Activated T-helper 1 cell treated with anti-CD3 and anti-CD28 coated beads, Interleukin-12 subunit alpha, Interleukin-12 subunit beta, Interleukin-2, Interleukin-4 antibody, amounts not matched to agents 30 ng/mL and 10 ng/mL and 1 ng/mL, durations not matched to agents 14 hours and 24 hours and 36 hours (primary cell): ENCODE measurements at regions of chr20 and their contacts with region 1.

Region 1: GRCh38 chr20:49278036-49278817 is at the start of gene ZNFX1:
- DNase-seq: peak; percentile 98
- H3K4me3 Mint-ChIP-seq: peak within 1 kb of the TSS; percentile 99
- H3K27ac Mint-ChIP-seq: peak within 1 kb of the TSS; percentile 98
- H3K4me1 Mint-ChIP-seq: peaks cover 61% of the 10 kb centered on the region
- H3K27me3 Mint-ChIP-seq: no peaks in the 10 kb centered on the region
- total RNA-seq, gene ZNFX1: 68.9 and 70.4 TPM in 2 replicates

Region 2: GRCh38 chr20:48769069-48769879 is 509.0 kb before region 1 on chr20:
- intact Hi-C with region 1: loop called (anchors 5 kb)
- DNase-seq: peak; percentile 86
- H3K4me3 Mint-ChIP-seq: peak overlapping the region; percentile 66
- H3K27ac Mint-ChIP-seq: peak overlapping the region; percentile 89
- H3K4me1 Mint-ChIP-seq: peaks cover 87% of the 10 kb centered on the region
- H3K27me3 Mint-ChIP-seq: no peaks in the 10 kb centered on the region

Region 3: GRCh38 chr20:49166534-49167449 is 111.4 kb before region 1 on chr20:
- intact Hi-C with region 1: loop called (anchors 5 kb)
- DNase-seq: no peak
- H3K4me3 Mint-ChIP-seq: peak overlapping the region; percentile 72
- H3K27ac Mint-ChIP-seq: peak overlapping the region; percentile 89
- H3K4me1 Mint-ChIP-seq: peaks cover 51% of the 10 kb centered on the region
- H3K27me3 Mint-ChIP-seq: no peaks in the 10 kb centered on the region

Region 4: GRCh38 chr20:49219089-49219923 is 58.9 kb before region 1 on chr20 and contains the start of gene DDX27:
- intact Hi-C with region 1: loop called (anchors 1 kb)
- DNase-seq: peak; percentile 95
- H3K4me3 Mint-ChIP-seq: peak within 1 kb of the TSS; percentile 97
- H3K27ac Mint-ChIP-seq: peak within 1 kb of the TSS; percentile 98
- H3K4me1 Mint-ChIP-seq: peaks cover 26% of the 10 kb centered on the region
- H3K27me3 Mint-ChIP-seq: no peaks in the 10 kb centered on the region
- total RNA-seq, gene DDX27: 53.1 and 57.4 TPM in 2 replicates

Region 5: DNA sequence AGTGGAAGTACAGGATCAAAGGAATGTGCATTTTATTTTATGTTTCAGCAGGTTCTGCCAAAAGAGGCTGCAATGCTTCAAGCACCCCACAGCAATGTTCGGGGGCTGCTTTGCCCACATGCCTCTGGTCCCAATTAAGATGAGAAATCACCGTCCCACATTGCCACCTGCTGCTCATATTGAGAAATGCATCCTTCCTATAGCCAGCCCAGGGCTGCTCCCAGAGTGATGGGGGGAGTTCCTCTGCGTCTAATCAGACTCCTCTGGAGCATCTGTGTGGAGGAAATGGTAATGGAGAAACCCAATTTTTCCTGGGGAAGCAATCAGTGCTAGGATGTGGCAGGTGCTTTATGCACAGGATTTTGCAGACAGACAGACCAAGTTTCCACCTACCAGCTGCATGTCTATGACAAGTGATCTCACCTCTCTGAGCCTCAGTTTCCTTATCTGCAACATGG is 256.1 kb after region 1 on chr20:
- intact Hi-C with region 1: loop called (anchors 1 kb)
- DNase-seq: peak; percentile 55
- H3K4me3 Mint-ChIP-seq: peak overlapping the region; percentile 29
- H3K27ac Mint-ChIP-seq: peak overlapping the region; percentile 90
- H3K4me1 Mint-ChIP-seq: peaks cover 23% of the 10 kb centered on the region
- H3K27me3 Mint-ChIP-seq: peaks cover 20% of the 10 kb centered on the region

Region 6: DNA sequence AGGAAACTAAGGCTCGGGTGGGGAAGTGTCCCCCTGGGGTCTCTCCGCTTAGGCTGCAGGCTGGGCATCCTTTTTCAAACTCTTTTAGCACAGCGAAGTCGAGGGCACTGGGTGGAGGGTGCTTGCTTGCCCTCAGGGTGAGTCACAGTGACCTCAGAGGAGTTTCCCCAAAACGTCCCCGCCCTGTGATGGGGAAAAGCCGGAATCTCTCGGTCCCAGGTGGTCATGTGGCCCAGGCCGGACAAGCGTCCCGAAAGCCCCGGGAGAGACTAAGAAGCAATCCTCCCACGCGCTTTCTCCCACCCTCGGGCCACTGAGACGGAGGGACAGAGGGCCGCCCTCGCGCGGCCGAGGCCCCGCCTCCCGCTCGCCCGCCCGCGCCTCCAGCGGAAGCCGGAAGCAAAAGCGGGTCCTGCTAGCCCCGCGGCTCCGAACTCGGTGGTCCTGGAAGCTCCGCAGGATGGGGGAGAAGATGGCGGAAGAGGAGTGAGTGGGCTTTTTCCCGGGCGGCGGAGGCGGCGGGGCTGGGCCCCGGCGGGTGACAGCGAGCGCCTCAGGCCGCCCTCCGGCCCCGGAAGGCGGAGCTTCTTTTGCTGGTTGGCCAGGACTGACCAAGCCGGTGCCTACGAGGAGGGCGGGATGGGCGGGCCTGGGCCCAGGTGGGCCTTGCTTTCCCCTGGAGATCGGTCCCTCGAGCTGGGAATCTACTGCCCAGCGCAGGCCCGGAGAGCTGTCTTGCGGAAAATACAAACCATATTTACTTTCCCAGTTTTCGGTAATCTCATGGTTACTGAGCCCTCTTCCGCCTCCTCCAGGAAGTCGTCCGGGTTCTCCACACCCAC is 534.5 kb after region 1 on chr20 and contains the start of gene SLC9A8:
- intact Hi-C with region 1: loop called (anchors 2 kb)
- DNase-seq: peak; percentile 83
- H3K4me3 Mint-ChIP-seq: peak within 1 kb of the TSS; percentile 91
- H3K27ac Mint-ChIP-seq: peak within 1 kb of the TSS; percentile 97
- H3K4me1 Mint-ChIP-seq: peaks cover 50% of the 10 kb centered on the region
- H3K27me3 Mint-ChIP-seq: no peaks in the 10 kb centered on the region
- total RNA-seq, gene SLC9A8: 16.2 and 20.8 TPM in 2 replicates

Region 7: GRCh38 chr20:50929299-50930138 is 1651.3 kb after region 1 on chr20:
- intact Hi-C with region 1: loop called (anchors 10 kb)
- DNase-seq: peak; percentile 91
- H3K4me3 Mint-ChIP-seq: peak overlapping the region; percentile 95
- H3K27ac Mint-ChIP-seq: peak overlapping the region; percentile 95
- H3K4me1 Mint-ChIP-seq: peaks cover 66% of the 10 kb centered on the region
- H3K27me3 Mint-ChIP-seq: no peaks in the 10 kb centered on the region